ENCODE measurements at regions of chr10 and their contacts with region 1.

Region 1: GRCh38 chr10:62437696-62438095 is 63.5 kb downstream of the ZNF365 start:
- DNase-seq: peak; percentile 64
- H3K4me3 Mint-ChIP-seq: no peak overlapping the region
- H3K27ac Mint-ChIP-seq: no peak overlapping the region
- H3K4me1 Mint-ChIP-seq: peaks cover 22% of the 10 kb centered on the region
- H3K27me3 Mint-ChIP-seq: no peaks in the 10 kb centered on the region
- CTCF ChIP-seq: peak; percentile 69

Region 2: GRCh38 chr10:62268399-62269114 is 169.1 kb before region 1 on chr10 and contains the start of gene RTKN2:
- CTCF ChIA-PET with region 1: interaction called, 5 read pairs
- POLR2A ChIA-PET with region 1: interaction called, 4 read pairs
- intact Hi-C with region 1: loop called (anchors 2 kb)
- DNase-seq: peak; percentile 71
- H3K4me3 Mint-ChIP-seq: peak within 1 kb of the TSS; percentile 86
- H3K27ac Mint-ChIP-seq: peak within 1 kb of the TSS; percentile 39
- H3K4me1 Mint-ChIP-seq: peaks cover 21% of the 10 kb centered on the region
- H3K27me3 Mint-ChIP-seq: no peaks in the 10 kb centered on the region
- CTCF ChIP-seq: no peak
- total RNA-seq, gene RTKN2: 1.6 and 2.6 TPM in 2 replicates

Region 3: GRCh38 chr10:62451611-62451975 is 13.9 kb after region 1 on chr10:
- CTCF ChIA-PET with region 1: interaction called, 27 read pairs
- POLR2A ChIA-PET with region 1: no interaction called
- intact Hi-C with region 1: no loop called
- DNase-seq: no peak
- H3K4me3 Mint-ChIP-seq: no peak overlapping the region
- H3K27ac Mint-ChIP-seq: no peak overlapping the region
- H3K4me1 Mint-ChIP-seq: peaks cover 9% of the 10 kb centered on the region
- H3K27me3 Mint-ChIP-seq: no peaks in the 10 kb centered on the region
- CTCF ChIP-seq: no peak

Region 4: DNA sequence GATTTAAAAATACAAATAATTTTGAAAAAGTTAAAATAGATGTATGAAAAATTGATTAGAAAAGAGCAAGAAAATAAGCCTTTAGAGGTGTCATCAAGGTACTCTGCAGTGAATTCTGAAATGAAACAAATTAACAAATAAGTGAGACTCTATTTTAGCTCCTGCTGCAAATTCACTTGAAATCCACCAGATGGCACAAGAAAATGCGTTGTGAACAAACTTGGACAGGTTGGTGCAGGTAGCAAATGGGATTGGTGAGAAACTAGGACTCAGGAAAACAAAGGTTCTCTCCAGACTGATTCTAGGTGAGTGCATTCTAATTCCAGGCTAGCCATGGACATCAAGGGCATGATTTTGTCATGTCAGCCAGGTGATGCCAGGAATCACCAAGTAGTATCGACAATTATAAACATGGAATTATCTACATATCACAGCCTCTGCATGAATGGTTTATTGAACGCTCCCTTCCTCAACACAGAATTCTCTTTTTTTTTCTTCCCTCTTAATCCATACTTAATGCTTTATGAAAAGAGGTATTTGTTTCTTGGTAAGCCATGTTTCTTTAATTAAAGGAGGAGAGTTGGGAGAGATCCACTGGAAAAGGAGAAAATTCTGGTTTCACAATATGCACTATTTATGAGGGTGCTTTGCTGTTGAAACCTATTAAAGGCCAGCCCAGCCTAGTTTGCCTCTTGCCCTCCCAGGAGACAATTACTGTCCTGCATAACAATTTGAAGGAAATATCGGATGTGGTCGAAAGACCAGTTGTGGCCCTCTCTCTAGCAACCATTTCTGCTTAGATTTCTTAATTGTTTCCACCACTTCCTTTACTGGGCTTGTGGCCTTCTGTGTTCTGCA is 54.5 kb after region 1 on chr10:
- CTCF ChIA-PET with region 1: interaction called, 13 read pairs
- POLR2A ChIA-PET with region 1: interaction called, 3 read pairs
- intact Hi-C with region 1: loop called (anchors 1 kb)
- DNase-seq: peak; percentile 61
- H3K4me3 Mint-ChIP-seq: no peak overlapping the region
- H3K27ac Mint-ChIP-seq: no peak overlapping the region
- H3K4me1 Mint-ChIP-seq: no peaks in the 10 kb centered on the region
- H3K27me3 Mint-ChIP-seq: no peaks in the 10 kb centered on the region
- CTCF ChIP-seq: peak; percentile 48

Region 5: GRCh38 chr10:62804356-62805230 is 366.9 kb after region 1 on chr10 and contains the start of gene ADO:
- CTCF ChIA-PET with region 1: interaction called, 7 read pairs
- POLR2A ChIA-PET with region 1: no interaction called
- intact Hi-C with region 1: loop called (anchors 2 kb)
- DNase-seq: peak; percentile 77
- H3K4me3 Mint-ChIP-seq: peak within 1 kb of the TSS; percentile 91
- H3K27ac Mint-ChIP-seq: peak within 1 kb of the TSS; percentile 98
- H3K4me1 Mint-ChIP-seq: peaks cover 22% of the 10 kb centered on the region
- H3K27me3 Mint-ChIP-seq: peaks cover 11% of the 10 kb centered on the region
- CTCF ChIP-seq: no peak
- total RNA-seq, gene ADO: 22.1 and 24.3 TPM in 2 replicates